Dorsolateral prefrontal cortex (tissue), 120 donors: ENCODE measurements at regions of chr22 and their contacts with region 1.

Region 1: GRCh38 chr22:23838681-23839468 is at the start of gene DERL3:
- DNase-seq: peak; percentile 90 to 98 (median 96)
- H3K4me3 ChIP-seq: peak within 1 kb of the TSS; percentile 44 to 88 (median 64)
- H3K27ac ChIP-seq: peak within 1 kb of the TSS in 5 of 59 donors; percentile 8 to 20 (median 14)
- H3K27me3 ChIP-seq: no peaks in the 10 kb centered on the region
- CTCF ChIP-seq: peak in 6 of 56 donors; percentile 10 to 33 (median 20)
- total RNA-seq, gene DERL3: 0.56 to 10.6 (median 2.5) TPM

Region 2: GRCh38 chr22:23781511-23782315 is 57.2 kb before region 1 on chr22:
- intact Hi-C with region 1: loop called (anchors 2 to 5 kb)
- DNase-seq: peak in 2 of 10 donors; percentile 44 to 63
- H3K4me3 ChIP-seq: peak overlapping the region in 1 of 59 donors; percentile 23
- H3K27ac ChIP-seq: peak overlapping the region in 46 of 59 donors; percentile 3 to 87 (median 70)
- H3K27me3 ChIP-seq: no peaks in the 10 kb centered on the region
- CTCF ChIP-seq: peak in 1 of 56 donors; percentile 3

Region 3: GRCh38 chr22:23786752-23787599 is 51.9 kb before region 1 on chr22 and contains the start of gene SMARCB1:
- intact Hi-C with region 1: loop called (anchors 2 to 5 kb)
- DNase-seq: peak; percentile 77 to 90 (median 86)
- H3K4me3 ChIP-seq: peak within 1 kb of the TSS; percentile 63 to 100 (median 91)
- H3K27ac ChIP-seq: peak within 1 kb of the TSS; percentile 88 to 100 (median 99)
- H3K27me3 ChIP-seq: no peaks in the 10 kb centered on the region
- CTCF ChIP-seq: peak in 15 of 56 donors; percentile 3 to 34 (median 11)
- total RNA-seq, gene SMARCB1: 60.2 to 91.8 (median 72.1) TPM